HepG2 (cell line): ENCODE measurements at regions of chr7 and their contacts with region 1.

Region 1: GRCh38 chr7:21507626-21508343 is 35.1 kb upstream of the DNAH11 start:
- DNase-seq: peak; percentile 34
- ATAC-seq: peak; percentile 93
- H3K4me3 ChIP-seq: no peak overlapping the region
- H3K27ac ChIP-seq: no peak overlapping the region
- H3K4me1 ChIP-seq: no peaks in the 10 kb centered on the region
- H3K27me3 ChIP-seq: no peaks in the 10 kb centered on the region
- CTCF ChIP-seq: peak; percentile 76
- EP300 ChIP-seq: no peak
- POLR2A ChIP-seq: no peak
- RAD21 ChIP-seq: peak; percentile 60

Region 2: DNA sequence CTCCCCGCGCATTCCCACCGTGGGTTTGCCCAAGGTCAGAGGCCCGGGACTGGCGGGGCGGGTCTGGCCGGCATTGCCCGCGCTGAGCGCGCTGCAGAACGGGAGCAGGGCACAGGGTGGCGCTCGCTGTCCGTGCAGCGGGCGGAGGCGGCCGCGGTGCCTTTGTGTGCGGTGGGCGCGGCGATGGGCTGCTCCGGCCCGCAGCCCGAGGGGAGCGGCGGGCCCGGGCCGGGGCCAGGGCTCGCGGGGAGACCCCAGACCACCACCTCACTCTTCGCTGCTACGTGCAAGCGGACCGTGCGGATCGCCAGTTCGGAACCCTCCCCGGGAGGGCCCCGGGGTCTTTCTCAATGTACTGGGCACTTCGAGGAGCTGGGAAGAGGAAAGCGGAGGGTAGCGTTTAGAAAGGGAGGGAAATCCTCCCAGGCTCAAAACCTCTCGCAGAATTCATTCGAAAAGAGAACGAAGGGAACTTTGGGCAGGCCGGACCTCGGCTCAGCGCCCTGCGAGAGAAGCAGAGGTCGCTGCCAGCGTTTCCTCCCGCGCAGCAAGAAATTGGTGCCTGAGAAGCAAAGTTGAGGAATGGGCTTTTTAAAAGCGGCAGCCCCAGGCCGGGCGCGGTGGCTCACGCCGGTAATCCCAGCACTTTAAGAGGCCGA is 729.6 kb before region 1 on chr7:
- CTCF ChIA-PET with region 1: no interaction called
- POLR2A ChIA-PET with region 1: no interaction called
- in situ Hi-C with region 1: loop called (anchors 25 kb)
- intact Hi-C with region 1: loop called (anchors 1 kb)
- DNase-seq: no peak
- ATAC-seq: peak; percentile 100
- H3K4me3 ChIP-seq: peak overlapping the region; percentile 32 to 60 (median 48); a peak in 5 of 6 replicates
- H3K27ac ChIP-seq: no peak overlapping the region
- H3K4me1 ChIP-seq: peaks cover 5% of the 10 kb centered on the region; the same call in 1 of the 2 replicates
- H3K27me3 ChIP-seq: peaks cover 2 to 12% of the 10 kb centered on the region in 2 experiments; a peak in 3 of 5 replicates
- CTCF ChIP-seq: peak; percentile 85
- EP300 ChIP-seq: no peak
- POLR2A ChIP-seq: no peak
- RAD21 ChIP-seq: peak; percentile 95

Region 3: DNA sequence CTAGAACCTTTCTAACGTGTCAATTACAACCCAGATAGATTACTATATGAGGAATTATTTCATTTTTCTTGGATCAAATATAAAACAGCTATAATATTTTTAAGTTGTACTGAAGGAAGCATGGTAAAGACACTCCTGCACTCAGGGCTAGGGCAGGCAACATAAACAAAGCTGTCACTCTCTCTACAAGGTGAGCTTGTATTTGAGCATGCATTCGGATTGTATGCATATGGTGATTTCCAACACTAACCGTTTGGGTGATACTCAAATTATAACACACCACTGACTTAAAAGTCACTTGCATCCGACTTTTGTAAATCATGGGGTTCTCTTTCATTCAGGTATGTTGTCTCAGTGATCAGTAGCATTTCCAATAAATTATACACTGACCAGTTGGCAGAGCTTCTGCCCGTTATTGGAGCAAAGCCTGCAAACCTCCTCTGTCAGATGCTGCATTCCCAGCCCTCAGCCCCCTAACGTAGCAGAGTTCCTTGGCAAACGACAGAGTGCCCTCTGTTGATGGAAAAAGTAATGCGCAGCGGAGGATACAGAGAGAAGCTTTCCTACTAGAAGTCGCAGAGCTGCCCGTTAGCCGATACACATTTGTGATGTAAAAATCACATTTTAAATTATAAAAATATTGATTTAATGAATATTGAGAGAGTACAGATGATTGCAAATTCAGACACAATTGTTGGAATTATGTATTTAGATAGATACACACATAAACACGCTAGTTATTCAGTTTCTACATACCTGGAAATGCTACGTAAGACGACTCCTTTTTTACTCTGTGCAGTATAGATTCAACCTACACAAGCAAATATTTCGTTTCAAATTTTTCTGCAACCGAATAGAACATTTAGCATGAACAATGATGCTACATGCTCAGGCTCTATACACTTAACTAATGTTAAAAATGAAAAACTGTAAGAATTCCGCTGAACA is 253.8 kb before region 1 on chr7:
- CTCF ChIA-PET with region 1: interaction called, 13 read pairs
- POLR2A ChIA-PET with region 1: no interaction called
- in situ Hi-C with region 1: no loop called
- intact Hi-C with region 1: loop called (anchors 1 kb)
- DNase-seq: peak; percentile 48
- ATAC-seq: peak; percentile 98
- H3K4me3 ChIP-seq: no peak overlapping the region
- H3K27ac ChIP-seq: no peak overlapping the region
- H3K4me1 ChIP-seq: peaks cover 5% of the 10 kb centered on the region; the same call in 1 of the 2 replicates
- H3K27me3 ChIP-seq: peaks cover 0 to 11% of the 10 kb centered on the region in 2 experiments; a peak in 1 of 5 replicates
- CTCF ChIP-seq: peak; percentile 81
- EP300 ChIP-seq: no peak
- POLR2A ChIP-seq: no peak
- RAD21 ChIP-seq: 0 out of 2 replicates have a peak, but pooled peaks have one; percentile 51

Region 4: DNA sequence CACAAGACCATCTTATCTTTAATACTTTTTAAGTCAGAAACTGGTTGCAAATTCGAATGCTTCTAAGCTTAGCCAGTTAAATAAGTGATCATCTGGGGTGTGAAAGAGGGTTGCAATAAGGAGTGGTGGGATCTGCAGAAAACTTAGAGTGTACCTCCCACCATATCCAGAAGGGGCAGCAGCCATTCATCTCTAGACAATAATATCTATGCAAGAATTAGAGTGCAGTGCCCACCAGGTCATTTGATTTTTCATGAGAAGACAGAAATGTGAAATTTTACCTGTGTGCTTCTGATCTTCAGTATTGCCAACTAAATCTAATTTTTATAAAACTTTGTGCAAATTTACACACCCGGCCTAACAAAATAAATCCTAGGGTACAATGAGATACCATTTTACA is 207.1 kb before region 1 on chr7:
- CTCF ChIA-PET with region 1: interaction called, 3 read pairs
- POLR2A ChIA-PET with region 1: no interaction called
- in situ Hi-C with region 1: no loop called
- intact Hi-C with region 1: loop called (anchors 5 kb)
- DNase-seq: peak; percentile 6
- ATAC-seq: peak; percentile 73
- H3K4me3 ChIP-seq: no peak overlapping the region
- H3K27ac ChIP-seq: no peak overlapping the region
- H3K4me1 ChIP-seq: no peaks in the 10 kb centered on the region
- H3K27me3 ChIP-seq: no peaks in the 10 kb centered on the region
- CTCF ChIP-seq: 0 out of 2 replicates have a peak, but pooled peaks have one; percentile 30
- EP300 ChIP-seq: no peak
- POLR2A ChIP-seq: no peak
- RAD21 ChIP-seq: no peak

Region 5: GRCh38 chr7:21412957-21413356 is 94.8 kb before region 1 on chr7:
- CTCF ChIA-PET with region 1: no interaction called
- POLR2A ChIA-PET with region 1: no interaction called
- in situ Hi-C with region 1: no loop called
- intact Hi-C with region 1: no loop called
- DNase-seq: no peak
- ATAC-seq: no peak
- H3K4me3 ChIP-seq: no peak overlapping the region
- H3K27ac ChIP-seq: no peak overlapping the region
- H3K4me1 ChIP-seq: no peaks in the 10 kb centered on the region
- H3K27me3 ChIP-seq: peaks cover 0 to 7% of the 10 kb centered on the region in 2 experiments; a peak in 1 of 5 replicates
- CTCF ChIP-seq: no peak
- EP300 ChIP-seq: no peak
- POLR2A ChIP-seq: no peak
- RAD21 ChIP-seq: no peak

Region 6: GRCh38 chr7:21480693-21481403 is 26.9 kb before region 1 on chr7:
- CTCF ChIA-PET with region 1: no interaction called
- POLR2A ChIA-PET with region 1: no interaction called
- in situ Hi-C with region 1: no loop called
- intact Hi-C with region 1: no loop called
- DNase-seq: no peak
- ATAC-seq: no peak
- H3K4me3 ChIP-seq: no peak overlapping the region
- H3K27ac ChIP-seq: no peak overlapping the region
- H3K4me1 ChIP-seq: no peaks in the 10 kb centered on the region
- H3K27me3 ChIP-seq: no peaks in the 10 kb centered on the region
- CTCF ChIP-seq: no peak
- EP300 ChIP-seq: no peak
- POLR2A ChIP-seq: no peak
- RAD21 ChIP-seq: no peak

Region 7: DNA sequence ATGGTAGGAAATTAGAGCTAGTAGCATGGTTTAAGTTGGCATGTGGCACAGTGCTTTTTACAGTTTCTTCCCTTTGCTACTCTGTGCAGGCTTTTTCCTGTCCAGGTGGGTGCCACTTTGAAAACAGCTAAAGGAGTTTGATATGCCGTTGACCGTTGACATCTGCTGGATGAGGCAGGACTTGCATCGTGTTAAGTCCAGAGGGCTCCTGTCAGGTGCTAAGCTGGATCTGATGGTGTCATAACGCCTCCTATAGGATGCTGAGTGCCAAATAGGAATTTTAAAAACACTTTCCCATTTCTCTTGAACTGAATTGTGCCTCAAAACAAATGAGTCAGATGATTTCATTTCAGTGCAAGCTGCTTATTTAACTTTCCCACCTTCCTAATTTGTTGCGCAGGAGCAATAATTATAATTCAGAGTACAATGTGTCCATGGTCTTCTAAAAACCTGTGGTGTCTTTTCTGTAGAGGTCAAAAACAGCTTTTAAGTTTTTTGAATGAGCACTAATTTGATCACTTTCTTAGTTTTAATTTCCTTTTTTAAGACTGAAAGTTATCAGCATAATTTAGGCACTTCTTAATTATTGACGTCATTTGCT is 259.6 kb after region 1 on chr7:
- CTCF ChIA-PET with region 1: no interaction called
- POLR2A ChIA-PET with region 1: no interaction called
- in situ Hi-C with region 1: no loop called
- intact Hi-C with region 1: loop called (anchors 10 kb)
- DNase-seq: peak; percentile 84
- ATAC-seq: peak; percentile 100
- H3K4me3 ChIP-seq: no peak overlapping the region
- H3K27ac ChIP-seq: no peak overlapping the region
- H3K4me1 ChIP-seq: no peaks in the 10 kb centered on the region
- H3K27me3 ChIP-seq: no peaks in the 10 kb centered on the region
- CTCF ChIP-seq: peak; percentile 89
- EP300 ChIP-seq: no peak
- POLR2A ChIP-seq: no peak
- RAD21 ChIP-seq: peak; percentile 81